MCF 10A (cell line): ENCODE measurements at regions of chr1 and their contacts with region 1.

Region 1: GRCh38 chr1:104780470-104781078 is 1030.9 kb downstream of the AMY1C start:
- DNase-seq: peak; percentile 45
- H3K4me3 Mint-ChIP-seq: no peak overlapping the region
- H3K27ac Mint-ChIP-seq: no peak overlapping the region
- H3K4me1 Mint-ChIP-seq: no peaks in the 10 kb centered on the region
- H3K27me3 Mint-ChIP-seq: no peaks in the 10 kb centered on the region
- CTCF ChIP-seq: peak; percentile 71

Region 2: GRCh38 chr1:103788377-103788776 is 992.2 kb before region 1 on chr1:
- CTCF ChIA-PET with region 1: no interaction called
- POLR2A ChIA-PET with region 1: no interaction called
- intact Hi-C with region 1: loop called (anchors 5 kb)
- DNase-seq: peak; percentile 42
- H3K4me3 Mint-ChIP-seq: no peak overlapping the region
- H3K27ac Mint-ChIP-seq: no peak overlapping the region
- H3K4me1 Mint-ChIP-seq: no peaks in the 10 kb centered on the region
- H3K27me3 Mint-ChIP-seq: peaks cover 5% of the 10 kb centered on the region
- CTCF ChIP-seq: peak; percentile 35

Region 3: DNA sequence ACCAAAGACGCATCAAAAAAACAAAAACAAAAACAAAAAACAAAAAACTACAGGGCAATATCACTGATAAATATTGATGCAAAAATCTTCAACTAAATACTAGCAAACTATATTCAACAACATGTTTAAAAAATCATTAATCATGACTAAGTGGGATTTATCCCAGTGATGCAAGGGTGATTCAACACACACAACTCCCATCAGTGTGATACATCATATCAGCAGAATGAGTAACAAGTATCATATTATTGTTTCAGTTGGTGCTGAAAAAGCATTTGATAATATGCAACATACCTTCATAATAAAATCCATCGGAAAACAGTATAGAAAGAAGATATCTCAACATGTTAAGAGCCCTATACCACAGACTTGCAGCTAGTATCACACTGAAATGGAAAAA is 77.8 kb before region 1 on chr1:
- CTCF ChIA-PET with region 1: no interaction called
- POLR2A ChIA-PET with region 1: no interaction called
- intact Hi-C with region 1: no loop called
- DNase-seq: peak; percentile 6
- H3K4me3 Mint-ChIP-seq: no peak overlapping the region
- H3K27ac Mint-ChIP-seq: no peak overlapping the region
- H3K4me1 Mint-ChIP-seq: no peaks in the 10 kb centered on the region
- H3K27me3 Mint-ChIP-seq: no peaks in the 10 kb centered on the region
- CTCF ChIP-seq: no peak

Region 4: GRCh38 chr1:105137543-105138457 is 357.2 kb after region 1 on chr1:
- CTCF ChIA-PET with region 1: no interaction called
- POLR2A ChIA-PET with region 1: no interaction called
- intact Hi-C with region 1: loop called (anchors 10 kb)
- DNase-seq: peak; percentile 32
- H3K4me3 Mint-ChIP-seq: no peak overlapping the region
- H3K27ac Mint-ChIP-seq: no peak overlapping the region
- H3K4me1 Mint-ChIP-seq: no peaks in the 10 kb centered on the region
- H3K27me3 Mint-ChIP-seq: no peaks in the 10 kb centered on the region
- CTCF ChIP-seq: peak; percentile 24

Region 5: GRCh38 chr1:105608713-105609112 is 828.1 kb after region 1 on chr1:
- CTCF ChIA-PET with region 1: interaction called, 3 read pairs
- POLR2A ChIA-PET with region 1: no interaction called
- intact Hi-C with region 1: loop called (anchors 5 kb)
- DNase-seq: peak; percentile 23
- H3K4me3 Mint-ChIP-seq: no peak overlapping the region
- H3K27ac Mint-ChIP-seq: no peak overlapping the region
- H3K4me1 Mint-ChIP-seq: no peaks in the 10 kb centered on the region
- H3K27me3 Mint-ChIP-seq: no peaks in the 10 kb centered on the region
- CTCF ChIP-seq: peak; percentile 23

Region 6: DNA sequence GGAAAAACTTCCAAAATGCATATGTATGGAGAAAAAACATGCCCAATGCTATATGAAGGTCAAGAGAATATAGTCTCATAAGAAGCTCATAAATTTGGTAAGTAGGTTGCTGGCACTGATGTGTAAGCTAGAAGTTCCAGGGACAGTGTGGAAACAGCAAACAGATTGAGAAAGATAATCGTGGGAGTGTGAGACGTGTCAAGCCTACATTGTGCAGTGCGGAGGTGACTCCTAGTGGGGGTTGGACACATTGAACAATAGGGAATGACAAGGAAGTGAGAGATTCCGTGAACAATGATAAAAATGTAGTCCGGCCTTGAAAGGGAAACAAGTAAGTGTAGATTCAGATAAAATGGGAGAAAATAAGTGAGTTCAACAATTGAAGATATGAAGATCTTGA is 1487.5 kb after region 1 on chr1:
- CTCF ChIA-PET with region 1: interaction called, 3 read pairs
- POLR2A ChIA-PET with region 1: no interaction called
- intact Hi-C with region 1: loop called (anchors 5 kb)
- DNase-seq: peak; percentile 71
- H3K4me3 Mint-ChIP-seq: no peak overlapping the region
- H3K27ac Mint-ChIP-seq: no peak overlapping the region
- H3K4me1 Mint-ChIP-seq: peaks cover 10% of the 10 kb centered on the region
- H3K27me3 Mint-ChIP-seq: no peaks in the 10 kb centered on the region
- CTCF ChIP-seq: peak; percentile 49